GM10248 (cell line): ENCODE measurements at regions of chr3 and their contacts with region 1.

Region 1: GRCh38 chr3:8982509-8982908 is 19.2 kb upstream of the RAD18 start:
- DNase-seq: no peak
- CTCF ChIP-seq: no peak

Region 2: GRCh38 chr3:8970971-8971589 is 11.4 kb before region 1 on chr3:
- CTCF ChIA-PET with region 1: interaction called, 90 read pairs
- POLR2A ChIA-PET with region 1: no interaction called
- DNase-seq: peak; percentile 64
- CTCF ChIP-seq: peak; percentile 84